GM18951 (cell line): ENCODE measurements at regions of chr2 and their contacts with region 1.

Region 1: DNA sequence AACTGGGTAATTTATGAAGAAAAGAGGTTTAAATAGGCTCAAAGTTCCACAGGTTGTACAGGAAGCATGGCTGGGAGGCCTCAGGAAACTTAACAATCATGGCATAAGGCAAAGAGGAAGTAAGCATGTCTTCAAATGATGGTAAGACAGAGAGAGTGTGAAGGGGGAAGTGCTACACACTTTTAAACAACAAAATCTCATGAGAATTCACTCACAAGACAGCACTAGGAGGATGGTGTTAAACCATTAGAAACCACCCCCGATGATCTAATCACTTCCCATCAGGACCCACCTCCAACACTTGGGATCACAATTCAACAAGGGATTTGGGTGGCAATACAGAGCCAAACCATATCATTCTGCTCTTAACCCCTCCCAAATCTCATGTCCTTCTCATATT is 34.9 kb downstream of the CFAP210 start:
- POLR2A ChIP-seq: no peak

Region 2: DNA sequence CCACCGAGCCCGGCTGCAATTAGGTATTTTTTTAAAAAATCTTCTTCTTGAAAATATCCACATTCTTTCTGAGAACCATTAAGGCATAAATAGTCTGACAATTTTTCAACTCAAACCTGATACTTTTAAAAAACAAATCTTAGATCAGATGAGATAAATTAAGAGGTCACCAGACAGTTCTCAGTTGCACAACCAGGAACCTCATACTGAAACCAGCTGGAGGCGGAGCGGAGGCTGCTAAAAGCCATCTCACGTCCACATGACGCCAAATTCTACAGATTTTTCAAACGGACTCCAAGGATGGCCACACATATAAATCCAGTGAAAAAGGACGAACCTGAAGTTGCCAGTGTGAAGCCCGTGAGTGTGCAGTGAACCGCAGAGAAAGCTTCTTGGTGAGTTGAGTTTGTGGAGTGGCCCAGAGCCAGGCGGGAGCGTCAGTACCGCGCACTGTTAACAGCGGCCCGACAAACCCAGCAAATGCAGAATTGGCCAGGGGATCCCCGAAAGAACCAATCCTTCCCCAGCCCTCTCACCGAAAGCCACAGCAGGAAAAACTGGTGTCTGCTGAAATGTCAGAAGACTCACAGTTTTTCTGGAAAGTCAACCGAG is 233.2 kb before region 1 on chr2:
- in situ Hi-C with region 1: loop called (anchors 10 kb)
- POLR2A ChIP-seq: no peak